Heart right ventricle (tissue), 16 donors: ENCODE measurements at regions of chr1 and their contacts with region 1.

Region 1: GRCh38 chr1:30525971-30526651 is 197.3 kb downstream of the MATN1 start:
- DNase-seq: peak; percentile 28 to 35
- ATAC-seq: peak in 5 of 8 donors; percentile 5 to 48 (median 26)
- H3K4me3 ChIP-seq: no peak overlapping the region
- H3K27ac ChIP-seq: peak overlapping the region in 9 of 10 donors; percentile 78 to 94 (median 87)
- H3K4me1 ChIP-seq: peaks cover 6 to 63% (median 31%) of the 10 kb centered on the region in 9 donors
- H3K27me3 ChIP-seq: peaks cover 0 to 9% (median 0%) of the 10 kb centered on the region in 7 donors
- CTCF ChIP-seq: no peak

Region 2: DNA sequence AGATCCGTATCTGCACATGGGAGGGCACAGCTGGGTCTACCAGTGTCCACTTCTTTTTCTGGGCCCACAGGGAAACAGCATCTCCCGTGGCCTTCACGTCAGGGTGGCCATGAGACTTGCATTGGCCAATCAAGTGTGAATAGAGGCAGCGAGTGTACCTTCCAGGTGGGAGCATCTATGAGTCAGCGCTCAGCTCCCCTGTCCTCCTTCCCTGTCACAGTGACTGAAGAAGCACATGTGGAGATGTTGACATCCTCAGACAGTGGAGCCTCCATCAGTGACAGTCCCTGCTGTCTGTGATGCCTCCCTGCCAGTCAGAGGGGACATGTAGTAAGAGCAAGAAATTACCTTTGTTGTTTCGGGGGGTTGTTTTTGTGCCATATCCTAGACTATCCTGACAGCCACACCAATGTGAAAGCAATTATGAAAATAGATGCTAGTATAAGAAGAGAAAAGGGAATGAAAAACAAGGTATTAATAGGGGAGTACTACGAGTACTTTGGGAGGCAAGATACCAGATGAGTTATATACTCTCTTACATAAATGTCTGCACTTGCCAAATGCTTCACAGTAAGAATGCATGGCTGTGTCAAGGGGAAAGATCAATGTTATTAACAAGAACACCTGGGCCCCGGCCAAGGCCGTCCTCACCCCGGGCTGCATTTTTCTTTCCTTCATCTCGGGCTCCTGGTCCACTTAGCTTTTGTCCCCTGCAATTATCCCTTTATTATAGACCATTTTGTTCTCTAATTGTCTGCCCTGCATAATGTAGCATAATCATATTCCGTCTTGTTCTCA is 111.3 kb after region 1 on chr1:
- intact Hi-C with region 1: loop called in 2 of 10 experiments (anchors 5 kb)
- DNase-seq: no peak
- ATAC-seq: peak in 3 of 8 donors; percentile 27 to 72 (median 48)
- H3K4me3 ChIP-seq: no peak overlapping the region
- H3K27ac ChIP-seq: peak overlapping the region in 1 of 10 donors; percentile 40
- H3K4me1 ChIP-seq: peaks cover 0 to 13% (median 4%) of the 10 kb centered on the region in 9 donors
- H3K27me3 ChIP-seq: peaks cover 0 to 13% (median 4%) of the 10 kb centered on the region in 7 donors
- CTCF ChIP-seq: no peak

Region 3: GRCh38 chr1:30684881-30685795 is 159.0 kb after region 1 on chr1:
- intact Hi-C with region 1: loop called in 1 of 10 experiments (anchors 10 kb)
- DNase-seq: peak in 1 of 2 donors; percentile 23
- ATAC-seq: peak; percentile 29 to 83 (median 55)
- H3K4me3 ChIP-seq: peak overlapping the region in 1 of 10 donors; percentile 10
- H3K27ac ChIP-seq: no peak overlapping the region
- H3K4me1 ChIP-seq: peaks cover 0 to 18% (median 0%) of the 10 kb centered on the region in 9 donors
- H3K27me3 ChIP-seq: peaks cover 0 to 77% (median 58%) of the 10 kb centered on the region in 7 donors
- CTCF ChIP-seq: peak in 2 of 9 donors; percentile 24 to 30